ENCODE measurements at regions of chr6 and their contacts with region 1.

Region 1: DNA sequence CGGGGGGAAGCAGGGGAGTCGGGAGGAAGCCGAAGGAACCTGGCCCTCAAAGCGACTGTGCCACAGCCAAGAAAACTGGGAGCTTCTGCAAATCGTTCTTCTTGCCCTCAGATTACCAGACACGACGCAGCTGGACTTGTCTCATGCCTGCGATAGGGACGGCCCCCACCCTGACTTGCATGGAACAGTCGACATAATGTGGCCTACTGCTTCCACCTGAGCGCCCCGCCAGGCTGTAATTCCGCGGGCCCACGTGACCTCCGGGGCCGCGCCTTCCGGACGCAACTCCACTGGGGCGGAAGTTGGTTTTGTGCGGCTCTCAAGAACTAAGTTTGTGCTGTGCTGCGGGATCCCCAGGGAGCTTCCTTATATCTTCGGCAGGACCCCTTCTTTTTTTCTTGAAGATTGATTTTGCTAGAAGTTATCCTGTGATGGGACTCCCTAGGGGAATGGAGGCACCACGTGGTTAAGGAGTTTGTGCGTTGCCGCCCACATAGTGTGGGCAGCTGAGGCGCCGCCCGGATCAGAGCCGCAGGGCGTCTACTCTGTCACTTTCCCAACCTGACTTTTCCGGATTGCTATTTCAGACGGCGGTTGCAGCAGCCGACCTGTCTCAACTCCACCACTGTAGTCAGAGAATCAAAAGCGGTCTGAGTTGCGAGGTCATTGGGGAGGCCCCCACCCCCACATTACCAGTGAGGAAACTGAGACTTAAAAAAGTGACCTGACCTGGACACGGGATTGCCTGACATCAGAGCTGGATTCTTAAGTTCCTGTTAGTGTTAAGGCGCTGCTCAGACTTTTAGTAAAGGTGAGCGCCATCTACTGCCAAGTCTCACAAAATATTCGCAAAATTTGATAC is 540 bp upstream of the CD164 start:
- DNase-seq: peak; percentile 97
- H3K4me3 Mint-ChIP-seq: peak overlapping the region; percentile 96
- H3K27ac Mint-ChIP-seq: peak overlapping the region; percentile 99
- H3K4me1 Mint-ChIP-seq: peaks cover 30% of the 10 kb centered on the region
- H3K27me3 Mint-ChIP-seq: peaks cover 4% of the 10 kb centered on the region

Region 2: GRCh38 chr6:107957909-107958688 is 1424.7 kb before region 1 on chr6 and contains the start of gene SEC63:
- intact Hi-C with region 1: loop called (anchors 2 kb)
- DNase-seq: peak; percentile 99
- H3K4me3 Mint-ChIP-seq: peak within 1 kb of the TSS; percentile 98
- H3K27ac Mint-ChIP-seq: peak within 1 kb of the TSS; percentile 99
- H3K4me1 Mint-ChIP-seq: peaks cover 22% of the 10 kb centered on the region
- H3K27me3 Mint-ChIP-seq: peaks cover 5% of the 10 kb centered on the region
- total RNA-seq, gene SEC63: 91.8 and 94.4 TPM in 2 replicates

Region 3: GRCh38 chr6:108874470-108875160 is 508.2 kb before region 1 on chr6:
- intact Hi-C with region 1: loop called (anchors 2 kb)
- DNase-seq: peak; percentile 87
- H3K4me3 Mint-ChIP-seq: peak overlapping the region; percentile 68
- H3K27ac Mint-ChIP-seq: peak overlapping the region; percentile 91
- H3K4me1 Mint-ChIP-seq: peaks cover 67% of the 10 kb centered on the region
- H3K27me3 Mint-ChIP-seq: peaks cover 20% of the 10 kb centered on the region

Region 4: GRCh38 chr6:109187399-109188114 is 195.2 kb before region 1 on chr6:
- intact Hi-C with region 1: loop called (anchors 1 kb)
- DNase-seq: peak; percentile 87
- H3K4me3 Mint-ChIP-seq: no peak overlapping the region
- H3K27ac Mint-ChIP-seq: no peak overlapping the region
- H3K4me1 Mint-ChIP-seq: no peaks in the 10 kb centered on the region
- H3K27me3 Mint-ChIP-seq: peaks cover 36% of the 10 kb centered on the region

Region 5: GRCh38 chr6:109440331-109441068 is 57.7 kb after region 1 on chr6 and contains the starts of genes PPIL6 and SMPD2:
- intact Hi-C with region 1: loop called (anchors 1 kb)
- DNase-seq: peak; percentile 95
- H3K4me3 Mint-ChIP-seq: peak within 1 kb of the TSS; percentile 97
- H3K27ac Mint-ChIP-seq: peak within 1 kb of the TSS; percentile 96
- H3K4me1 Mint-ChIP-seq: peaks cover 27% of the 10 kb centered on the region
- H3K27me3 Mint-ChIP-seq: peaks cover 2% of the 10 kb centered on the region
- total RNA-seq, gene PPIL6: not detected in 2 replicates
- total RNA-seq, gene SMPD2: 18.2 and 20.5 TPM in 2 replicates

Region 6: DNA sequence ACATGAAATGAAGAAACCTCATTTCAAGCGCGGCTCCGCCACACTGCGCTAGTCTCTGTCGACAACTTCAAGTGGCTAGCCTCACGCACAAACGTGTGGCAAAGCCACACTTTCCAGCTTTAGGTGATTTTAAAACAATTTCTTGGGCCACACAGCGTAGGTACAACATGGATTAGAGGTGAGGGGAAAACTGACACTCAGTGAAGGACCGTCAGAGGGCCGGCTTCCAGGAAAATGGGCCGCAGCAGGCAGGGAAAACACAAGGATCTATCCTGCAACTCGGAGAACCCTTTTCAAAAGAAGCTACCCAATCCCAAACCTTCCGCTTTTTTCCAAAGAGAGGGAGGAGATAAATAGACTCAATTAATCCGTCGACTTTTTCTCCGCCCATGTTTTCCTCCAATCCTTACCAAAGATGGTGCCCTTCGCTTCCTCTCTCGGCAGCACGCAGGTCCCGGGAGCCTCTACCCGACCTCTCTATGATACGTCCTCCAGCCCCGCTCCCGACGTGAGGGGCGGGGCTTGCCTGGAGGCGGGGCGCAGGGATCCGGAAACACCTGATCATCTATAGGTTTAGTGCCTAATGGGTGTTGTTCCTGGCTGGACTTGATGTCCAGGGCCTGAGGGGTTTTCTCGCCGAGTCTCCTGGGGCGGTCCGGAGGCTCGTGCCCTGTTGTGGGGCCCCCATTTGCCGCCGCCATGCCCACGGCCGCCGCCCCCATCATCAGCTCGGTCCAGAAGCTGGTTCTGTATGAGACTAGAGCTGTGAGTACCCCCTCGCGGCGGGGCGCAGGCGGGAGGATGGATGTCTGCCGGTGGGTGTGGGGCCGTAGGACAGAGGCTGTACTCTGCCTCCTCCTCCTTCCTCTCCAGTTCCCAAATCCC is 308.2 kb after region 1 on chr6 and contains the starts of genes AK9 and FIG4:
- intact Hi-C with region 1: loop called (anchors 1 kb)
- DNase-seq: peak; percentile 97
- H3K4me3 Mint-ChIP-seq: peak within 1 kb of the TSS; percentile 86
- H3K27ac Mint-ChIP-seq: peak within 1 kb of the TSS; percentile 87
- H3K4me1 Mint-ChIP-seq: peaks cover 27% of the 10 kb centered on the region
- H3K27me3 Mint-ChIP-seq: peaks cover 8% of the 10 kb centered on the region
- total RNA-seq, gene AK9: 2.1 and 3.2 TPM in 2 replicates
- total RNA-seq, gene FIG4: 8.1 and 8.5 TPM in 2 replicates

Region 7: GRCh38 chr6:110873981-110874879 is 1491.4 kb after region 1 on chr6 and contains the start of gene AMD1:
- intact Hi-C with region 1: loop called (anchors 5 kb)
- DNase-seq: peak; percentile 98
- H3K4me3 Mint-ChIP-seq: peak within 1 kb of the TSS; percentile 98
- H3K27ac Mint-ChIP-seq: peak within 1 kb of the TSS; percentile 99
- H3K4me1 Mint-ChIP-seq: peaks cover 27% of the 10 kb centered on the region
- H3K27me3 Mint-ChIP-seq: no peaks in the 10 kb centered on the region
- total RNA-seq, gene AMD1: 108 and 113 TPM in 2 replicates